ENCODE measurements at regions of chr2 and their contacts with region 1.

Region 1: DNA sequence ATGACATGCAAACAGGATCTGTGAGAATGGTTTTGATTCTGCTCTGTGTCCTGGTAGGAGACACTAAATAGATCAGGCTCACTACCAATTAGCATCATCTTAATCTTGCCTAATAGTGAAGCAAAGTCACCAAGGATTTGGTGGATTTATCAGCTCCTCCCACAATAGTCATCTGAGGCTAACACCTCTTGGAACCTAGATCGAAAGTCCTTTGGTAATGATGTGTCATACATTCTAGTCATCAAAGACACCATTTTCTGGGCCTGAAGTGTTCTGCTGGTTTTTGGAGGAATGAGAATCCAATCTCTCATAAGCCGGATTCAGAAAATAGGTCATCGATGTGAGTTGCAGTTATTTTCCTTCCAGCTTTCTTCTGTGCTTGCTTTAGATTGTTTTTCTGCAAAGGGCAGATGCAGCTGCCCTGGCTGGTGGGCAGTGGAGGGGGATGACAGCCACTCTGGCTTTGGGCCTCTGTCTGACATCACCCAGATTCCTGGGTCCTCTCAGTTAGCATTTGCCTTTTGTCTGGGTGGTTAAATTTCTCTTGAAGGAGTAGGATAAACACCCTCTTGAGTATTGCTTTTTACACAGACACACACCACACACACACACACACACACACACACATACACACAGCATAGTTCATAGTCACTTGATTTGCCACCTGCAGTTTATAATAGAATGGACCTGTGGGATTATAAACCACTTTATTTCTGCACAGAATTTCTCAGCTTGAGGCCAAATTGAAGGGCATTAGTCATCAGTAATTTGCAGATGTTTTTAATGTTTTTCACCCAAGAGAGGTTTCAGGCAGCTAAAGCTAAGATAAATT is at the start of gene MYO3B:
- DNase-seq: no peak
- ATAC-seq: peak; percentile 69
- H3K4me3 ChIP-seq: peak within 1 kb of the TSS; percentile 13; the same call in 1 of the 2 replicates
- H3K27ac ChIP-seq: peak within 1 kb of the TSS; percentile 80
- H3K4me1 ChIP-seq: peaks cover 38% of the 10 kb centered on the region
- H3K27me3 ChIP-seq: no peaks in the 10 kb centered on the region
- CTCF ChIP-seq: no peak
- EP300 ChIP-seq: peak; percentile 33 to 55; a peak in 2 of 4 replicates
- POLR2A ChIP-seq: no peak
- RAD21 ChIP-seq: no peak
- polyA plus RNA-seq, gene MYO3B: 1.1 to 1.2 TPM

Region 2: DNA sequence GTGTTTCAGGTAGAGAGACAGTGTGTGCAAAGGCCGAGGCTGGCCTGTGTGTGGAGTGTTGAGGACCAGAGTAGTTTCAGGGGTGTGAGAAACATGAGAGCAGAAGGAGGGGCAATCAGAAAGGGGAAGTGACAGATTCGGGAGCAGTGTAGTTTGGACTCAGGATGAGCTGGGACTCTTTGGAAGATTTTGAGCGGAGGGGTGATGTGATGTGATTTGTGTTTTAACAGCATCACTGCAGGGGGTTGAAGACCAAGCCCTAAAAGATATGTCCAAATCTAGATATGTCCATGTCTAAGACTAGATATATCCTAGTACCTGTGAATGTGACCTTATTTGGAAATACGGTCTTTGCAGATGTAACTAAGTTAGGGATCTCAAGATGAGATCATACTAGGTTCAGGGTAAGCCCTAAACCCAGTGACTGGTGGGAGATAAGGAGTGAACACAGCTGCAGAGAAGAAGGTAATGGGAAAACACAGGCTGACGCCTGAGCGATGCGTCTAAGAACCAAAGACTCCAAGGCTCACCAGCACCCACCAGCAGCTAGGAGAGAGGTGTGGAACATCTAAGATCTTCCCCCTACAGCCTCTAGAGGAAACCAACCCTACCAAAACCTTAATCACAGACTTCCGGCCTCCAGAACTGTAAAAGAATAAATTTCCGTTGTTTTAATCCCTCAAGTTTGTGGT is 38.7 kb before region 1 on chr2:
- CTCF ChIA-PET with region 1: no interaction called
- POLR2A ChIA-PET with region 1: interaction called, 4 read pairs
- RAD21 ChIA-PET with region 1: interaction called, 11 read pairs
- SMC1A ChIA-PET with region 1: interaction called, 12 read pairs
- in situ Hi-C with region 1: no loop called
- intact Hi-C with region 1: no loop called
- DNase-seq: no peak
- ATAC-seq: peak; percentile 83
- H3K4me3 ChIP-seq: no peak overlapping the region
- H3K27ac ChIP-seq: no peak overlapping the region
- H3K4me1 ChIP-seq: peaks cover 25% of the 10 kb centered on the region
- H3K27me3 ChIP-seq: no peaks in the 10 kb centered on the region
- CTCF ChIP-seq: no peak
- EP300 ChIP-seq: no peak
- POLR2A ChIP-seq: no peak
- RAD21 ChIP-seq: no peak

Region 3: GRCh38 chr2:170148161-170148560 is 30.0 kb before region 1 on chr2:
- CTCF ChIA-PET with region 1: interaction called, 3 read pairs
- POLR2A ChIA-PET with region 1: interaction called, 4 read pairs
- RAD21 ChIA-PET with region 1: interaction called, 5 read pairs
- SMC1A ChIA-PET with region 1: interaction called, 12 read pairs
- in situ Hi-C with region 1: no loop called
- intact Hi-C with region 1: no loop called
- DNase-seq: no peak
- ATAC-seq: no peak
- H3K4me3 ChIP-seq: no peak overlapping the region
- H3K27ac ChIP-seq: no peak overlapping the region
- H3K4me1 ChIP-seq: peaks cover 21% of the 10 kb centered on the region
- H3K27me3 ChIP-seq: no peaks in the 10 kb centered on the region
- CTCF ChIP-seq: no peak
- EP300 ChIP-seq: no peak
- POLR2A ChIP-seq: no peak
- RAD21 ChIP-seq: no peak

Region 4: DNA sequence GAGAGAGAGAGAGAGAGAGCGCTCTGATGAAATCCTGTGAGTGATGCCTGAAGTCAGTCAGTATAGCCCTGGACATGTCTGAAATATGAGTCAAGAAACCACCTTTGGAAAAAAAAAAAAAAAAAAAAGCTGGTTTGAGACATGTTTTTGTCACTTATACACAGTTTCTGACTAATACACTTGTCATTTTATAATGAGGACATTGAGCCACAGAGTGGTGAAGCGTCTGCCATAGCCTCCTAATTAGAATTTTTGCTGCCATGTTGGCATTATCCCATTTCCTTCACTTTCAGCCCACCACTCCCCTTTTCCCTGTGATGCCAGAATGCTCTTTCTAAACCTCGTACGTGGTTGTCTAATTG is 15.9 kb before region 1 on chr2:
- CTCF ChIA-PET with region 1: interaction called, 38 read pairs
- POLR2A ChIA-PET with region 1: interaction called, 112 read pairs
- RAD21 ChIA-PET with region 1: interaction called, 124 read pairs
- SMC1A ChIA-PET with region 1: interaction called, 291 read pairs
- in situ Hi-C with region 1: no loop called
- intact Hi-C with region 1: loop called (anchors 1 kb)
- DNase-seq: no peak
- ATAC-seq: no peak
- H3K4me3 ChIP-seq: no peak overlapping the region
- H3K27ac ChIP-seq: no peak overlapping the region
- H3K4me1 ChIP-seq: peaks cover 36% of the 10 kb centered on the region
- H3K27me3 ChIP-seq: no peaks in the 10 kb centered on the region
- CTCF ChIP-seq: no peak
- EP300 ChIP-seq: no peak
- POLR2A ChIP-seq: no peak
- RAD21 ChIP-seq: no peak

Region 5: DNA sequence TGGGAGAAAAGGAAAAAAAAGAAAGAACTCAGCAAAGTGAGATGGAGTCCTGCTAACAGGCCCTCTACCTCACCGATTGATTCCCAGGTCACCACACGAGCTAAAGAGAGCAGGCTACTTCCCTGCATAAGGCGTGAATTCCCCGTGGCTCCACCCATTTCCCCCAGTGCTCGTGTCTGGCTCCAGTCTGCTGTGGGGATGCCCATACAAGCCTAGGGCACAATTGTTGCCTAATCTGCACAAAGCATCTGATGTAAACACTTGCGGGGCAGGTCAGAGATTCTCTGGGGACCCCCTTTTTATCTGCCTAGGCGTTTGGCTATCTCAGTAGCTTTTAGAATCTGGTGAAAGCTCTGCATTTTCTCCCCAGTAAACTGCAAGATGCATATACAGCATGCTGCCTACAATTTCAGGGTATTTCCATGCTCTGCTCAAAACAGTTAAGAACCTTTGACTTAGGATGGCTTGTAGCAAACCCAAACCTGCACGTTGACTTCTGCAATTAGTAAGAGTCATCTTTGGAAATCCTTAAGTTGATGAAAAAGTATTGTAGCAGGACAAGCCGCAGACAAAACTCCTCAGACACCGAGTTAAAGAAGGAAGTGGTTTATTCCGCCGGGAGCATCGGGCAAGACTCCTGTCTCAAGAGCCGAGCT is 34.6 kb after region 1 on chr2:
- CTCF ChIA-PET with region 1: interaction called, 7 read pairs
- POLR2A ChIA-PET with region 1: interaction called, 18 read pairs
- RAD21 ChIA-PET with region 1: interaction called, 15 read pairs
- SMC1A ChIA-PET with region 1: interaction called, 36 read pairs
- in situ Hi-C with region 1: no loop called
- intact Hi-C with region 1: loop called (anchors 1 kb)
- DNase-seq: peak; percentile 64
- ATAC-seq: peak; percentile 72
- H3K4me3 ChIP-seq: peak overlapping the region; percentile 42
- H3K27ac ChIP-seq: peak overlapping the region; percentile 51
- H3K4me1 ChIP-seq: peaks cover 24% of the 10 kb centered on the region
- H3K27me3 ChIP-seq: no peaks in the 10 kb centered on the region
- CTCF ChIP-seq: no peak
- EP300 ChIP-seq: no peak
- POLR2A ChIP-seq: no peak
- RAD21 ChIP-seq: no peak

Measured in GM12878 (cell line).